CD4-positive, alpha-beta memory T cell (primary cell): ENCODE measurements at regions of chr19 and their contacts with region 1.

Region 1: DNA sequence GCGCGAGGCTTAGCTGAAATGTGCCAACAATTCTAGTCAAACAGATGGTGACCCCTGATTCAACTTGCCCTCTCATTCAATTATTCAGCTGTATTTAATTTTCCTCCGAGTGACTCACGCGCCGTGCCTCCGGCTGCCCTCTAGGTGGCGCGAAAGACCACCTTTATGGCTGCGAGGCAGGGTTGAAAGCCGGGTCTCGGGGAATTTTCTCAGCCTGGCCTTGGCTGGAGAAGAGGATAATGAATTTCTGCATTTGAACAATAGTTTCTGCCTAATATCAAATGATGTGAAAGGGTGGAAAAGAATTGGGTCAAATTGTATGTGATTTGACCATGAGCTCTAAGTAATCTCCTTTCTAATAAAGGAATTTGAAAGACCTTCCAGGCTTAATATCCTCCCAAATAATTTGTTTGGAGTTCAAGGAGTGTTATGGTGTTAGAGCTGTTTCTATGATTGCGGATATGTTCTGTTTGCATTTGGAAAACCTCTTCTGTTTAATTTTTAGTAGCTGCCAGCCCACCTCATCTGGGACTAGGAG is 310.9 kb downstream of the ZNF536 start:
- DNase-seq: peak in 4 of 5 donors; percentile 26 to 41 (median 33)
- H3K4me3 ChIP-seq: no peak overlapping the region
- H3K4me3 Mint-ChIP-seq: no peak overlapping the region
- H3K27ac ChIP-seq: no peak overlapping the region
- H3K27ac Mint-ChIP-seq: no peak overlapping the region
- H3K4me1 ChIP-seq: no peaks in the 10 kb centered on the region
- H3K4me1 Mint-ChIP-seq: peaks cover 0 to 1% (median 0%) of the 10 kb centered on the region in 4 donors
- H3K27me3 ChIP-seq: no peaks in the 10 kb centered on the region
- H3K27me3 Mint-ChIP-seq: peaks cover 23 to 28% of the 10 kb centered on the region in 2 donors

Region 2: GRCh38 chr19:30669329-30670010 is 13.6 kb before region 1 on chr19:
- CTCF ChIA-PET with region 1: interaction called, 37 read pairs
- POLR2A ChIA-PET with region 1: no interaction called
- intact Hi-C with region 1: no loop called
- DNase-seq: peak in 4 of 5 donors; percentile 5 to 23 (median 12)
- H3K4me3 ChIP-seq: no peak overlapping the region
- H3K4me3 Mint-ChIP-seq: no peak overlapping the region
- H3K27ac ChIP-seq: no peak overlapping the region
- H3K27ac Mint-ChIP-seq: no peak overlapping the region
- H3K4me1 ChIP-seq: no peaks in the 10 kb centered on the region
- H3K4me1 Mint-ChIP-seq: no peaks in the 10 kb centered on the region
- H3K27me3 ChIP-seq: peaks cover 5% of the 10 kb centered on the region
- H3K27me3 Mint-ChIP-seq: peaks cover 10 to 31% of the 10 kb centered on the region in 2 donors

Region 3: GRCh38 chr19:30698494-30698893 is 15.4 kb after region 1 on chr19:
- CTCF ChIA-PET with region 1: interaction called, 16 read pairs
- POLR2A ChIA-PET with region 1: no interaction called
- intact Hi-C with region 1: no loop called
- DNase-seq: no peak
- H3K4me3 ChIP-seq: no peak overlapping the region
- H3K4me3 Mint-ChIP-seq: no peak overlapping the region
- H3K27ac ChIP-seq: no peak overlapping the region
- H3K27ac Mint-ChIP-seq: no peak overlapping the region
- H3K4me1 ChIP-seq: peaks cover 11% of the 10 kb centered on the region
- H3K4me1 Mint-ChIP-seq: peaks cover 1 to 12% (median 7%) of the 10 kb centered on the region in 4 donors
- H3K27me3 ChIP-seq: no peaks in the 10 kb centered on the region
- H3K27me3 Mint-ChIP-seq: peaks cover 8% of the 10 kb centered on the region in 2 donors